GM12878 (cell line): ENCODE measurements at regions of chr16 and their contacts with region 1.

Region 1: DNA sequence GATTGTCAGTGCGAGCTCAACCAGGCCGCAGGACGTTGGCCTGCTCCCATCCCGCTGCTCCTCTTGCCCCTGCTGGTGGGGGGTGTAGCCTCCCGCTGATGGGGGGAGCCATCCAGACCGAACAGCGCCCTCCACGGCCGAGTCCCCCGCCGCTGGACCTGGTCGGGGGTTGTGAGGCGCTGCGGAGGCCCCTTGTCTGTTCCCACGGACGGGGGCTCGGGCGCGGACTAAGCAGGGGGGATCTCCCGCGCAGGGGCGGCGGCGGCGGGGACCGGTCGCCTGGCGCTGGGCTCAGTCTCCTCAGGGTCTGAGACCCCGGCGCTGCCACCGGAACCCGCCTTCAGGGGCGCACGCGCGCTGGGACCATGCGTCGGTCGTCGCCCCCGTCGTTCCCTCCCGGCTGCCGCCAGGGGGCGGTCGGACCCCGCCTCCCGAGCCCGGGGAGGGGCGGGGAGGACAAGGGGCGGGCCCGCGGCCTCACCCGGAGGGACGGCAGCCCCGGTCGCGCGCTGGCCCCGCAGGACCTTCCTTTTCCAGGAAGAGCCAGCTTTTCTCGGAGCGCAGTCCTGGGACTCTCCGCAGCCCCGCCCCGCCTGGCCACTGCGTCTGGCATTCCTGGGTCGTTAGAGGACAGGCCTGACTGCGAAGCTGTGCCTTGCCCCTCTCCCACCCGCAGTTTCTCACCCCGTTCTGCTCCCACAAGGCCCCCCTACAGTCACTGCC is 6.3 kb upstream of the IL32 start:
- DNase-seq: no peak
- ATAC-seq: peak; percentile 97
- H3K4me3 ChIP-seq: peak overlapping the region; percentile 87
- H3K27ac ChIP-seq: peak overlapping the region; percentile 70
- H3K4me1 ChIP-seq: peaks cover 16% of the 10 kb centered on the region
- H3K27me3 ChIP-seq: no peaks in the 10 kb centered on the region
- CTCF ChIP-seq: peak; percentile 71 to 94 (median 85)
- EP300 ChIP-seq: no peak
- POLR2A ChIP-seq: peak; percentile 71
- RAD21 ChIP-seq: peak; percentile 93

Region 2: DNA sequence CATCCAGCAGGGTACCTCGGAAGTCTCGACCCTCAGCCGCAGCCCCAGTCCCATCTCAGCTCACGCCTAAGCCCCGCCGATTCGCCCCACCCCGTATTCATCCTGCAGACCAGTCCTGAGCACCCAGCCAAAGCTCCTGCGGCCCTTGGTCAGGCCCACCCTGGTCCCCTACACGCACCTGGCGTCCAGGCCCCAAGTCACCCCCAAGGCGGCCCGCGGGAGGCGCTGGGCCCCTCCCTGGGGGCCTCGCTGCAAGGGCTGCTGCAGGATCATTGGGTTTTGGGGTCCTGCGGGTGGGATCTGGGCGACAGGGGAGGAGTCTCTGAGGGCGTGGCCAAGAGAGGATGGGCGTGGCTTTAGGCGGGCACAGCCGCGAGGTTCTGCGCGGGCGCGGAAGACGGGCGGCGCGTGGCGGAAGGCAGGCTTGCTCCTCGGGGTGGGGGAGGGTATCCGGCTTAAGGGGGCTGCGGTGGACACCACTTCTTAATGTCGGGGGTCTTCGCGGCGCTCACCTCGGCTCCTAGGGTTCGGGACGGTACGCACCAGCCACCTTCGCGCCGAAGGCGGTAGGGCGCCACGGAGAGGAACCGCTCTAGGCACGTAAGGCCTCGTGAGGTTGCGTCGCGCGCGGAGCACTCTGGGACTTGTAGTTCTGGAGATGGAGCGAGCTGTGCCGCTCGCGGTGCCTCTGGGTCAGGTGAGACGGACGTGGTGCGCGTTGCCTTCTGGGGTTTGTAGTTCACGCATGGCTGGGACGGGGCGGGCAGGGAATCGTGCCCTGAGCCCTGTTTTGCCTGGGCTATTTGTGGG is 35.3 kb before region 1 on chr16 and contains the starts of genes HCFC1R1 and THOC6:
- CTCF ChIA-PET with region 1: interaction called, 62 read pairs
- POLR2A ChIA-PET with region 1: interaction called, 4 read pairs
- RAD21 ChIA-PET with region 1: interaction called, 8 read pairs
- SMC1A ChIA-PET with region 1: interaction called, 4 read pairs
- in situ Hi-C with region 1: no loop called
- intact Hi-C with region 1: no loop called
- DNase-seq: peak; percentile 94
- ATAC-seq: peak; percentile 85
- H3K4me3 ChIP-seq: peak within 1 kb of the TSS; percentile 87
- H3K27ac ChIP-seq: peak within 1 kb of the TSS; percentile 86
- H3K4me1 ChIP-seq: peaks cover 25% of the 10 kb centered on the region
- H3K27me3 ChIP-seq: no peaks in the 10 kb centered on the region; a peak in 1 of 4 replicates
- CTCF ChIP-seq: no peak
- EP300 ChIP-seq: no peak
- POLR2A ChIP-seq: peak; percentile 95
- RAD21 ChIP-seq: no peak
- polyA plus RNA-seq, gene HCFC1R1: 2.8 to 10.2 TPM
- polyA plus RNA-seq, gene THOC6: 1.0 to 2.4 TPM

Region 3: GRCh38 chr16:3035302-3036234 is 23.6 kb before region 1 on chr16:
- CTCF ChIA-PET with region 1: interaction called, 62 read pairs
- POLR2A ChIA-PET with region 1: interaction called, 3 read pairs
- RAD21 ChIA-PET with region 1: interaction called, 28 read pairs
- SMC1A ChIA-PET with region 1: interaction called, 5 read pairs
- in situ Hi-C with region 1: no loop called
- intact Hi-C with region 1: no loop called
- DNase-seq: no peak
- ATAC-seq: no peak
- H3K4me3 ChIP-seq: no peak overlapping the region
- H3K27ac ChIP-seq: no peak overlapping the region
- H3K4me1 ChIP-seq: peaks cover 6% of the 10 kb centered on the region
- H3K27me3 ChIP-seq: peaks cover 8 to 17% of the 10 kb centered on the region in 2 experiments; a peak in 3 of 4 replicates
- CTCF ChIP-seq: no peak
- EP300 ChIP-seq: no peak
- POLR2A ChIP-seq: no peak
- RAD21 ChIP-seq: no peak

Region 4: GRCh38 chr16:3074860-3075522 is 15.8 kb after region 1 on chr16:
- CTCF ChIA-PET with region 1: interaction called, 39 read pairs
- POLR2A ChIA-PET with region 1: interaction called, 5 read pairs
- RAD21 ChIA-PET with region 1: interaction called, 14 read pairs
- SMC1A ChIA-PET with region 1: interaction called, 52 read pairs
- in situ Hi-C with region 1: no loop called
- intact Hi-C with region 1: no loop called
- DNase-seq: peak; percentile 69
- ATAC-seq: peak; percentile 88
- H3K4me3 ChIP-seq: peak overlapping the region; percentile 55
- H3K27ac ChIP-seq: peak overlapping the region; percentile 77
- H3K4me1 ChIP-seq: peaks cover 45% of the 10 kb centered on the region
- H3K27me3 ChIP-seq: no peaks in the 10 kb centered on the region
- CTCF ChIP-seq: no peak
- EP300 ChIP-seq: no peak
- POLR2A ChIP-seq: peak; percentile 64
- RAD21 ChIP-seq: no peak

Region 5: DNA sequence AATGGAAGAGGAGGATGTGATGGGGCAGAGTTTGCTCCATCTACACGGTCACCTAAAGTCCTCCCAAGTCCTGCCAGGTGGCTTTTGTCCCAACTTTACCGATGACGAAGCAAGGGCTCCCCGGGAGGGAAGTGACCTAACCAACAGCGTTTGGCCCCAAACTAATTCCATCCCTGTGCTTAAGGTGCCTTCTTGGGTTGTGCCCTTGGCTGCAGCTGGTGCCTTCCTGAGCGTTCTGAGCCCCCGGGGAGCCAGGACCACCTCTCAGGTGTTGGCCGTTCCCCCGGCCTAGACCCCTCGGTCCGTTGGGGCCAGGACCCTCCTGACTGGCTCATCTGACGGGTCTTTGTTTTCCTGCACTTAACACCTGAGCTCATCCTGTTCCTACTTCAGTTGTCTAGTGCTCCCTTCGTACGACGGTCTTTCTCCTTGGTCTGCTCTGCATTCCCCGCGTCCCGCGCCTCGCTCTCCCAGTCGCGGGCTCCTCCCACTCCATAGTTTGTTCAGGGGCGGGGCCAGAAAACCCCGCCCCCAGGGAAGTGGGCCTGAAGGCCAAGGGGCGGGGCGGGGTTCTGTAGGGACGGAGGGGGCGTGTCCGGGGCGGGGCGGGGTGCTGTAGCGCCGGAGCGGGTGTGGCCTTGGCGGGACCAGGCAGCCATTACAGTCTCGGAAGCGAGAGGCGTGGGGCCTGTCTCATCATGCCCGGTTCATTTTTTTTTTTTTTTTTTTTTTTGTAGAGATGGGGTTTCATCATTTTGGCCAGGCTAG is 40.8 kb after region 1 on chr16:
- CTCF ChIA-PET with region 1: interaction called, 19 read pairs
- POLR2A ChIA-PET with region 1: interaction called, 3 read pairs
- RAD21 ChIA-PET with region 1: interaction called, 6 read pairs
- SMC1A ChIA-PET with region 1: no interaction called
- in situ Hi-C with region 1: loop called (anchors 5 kb)
- intact Hi-C with region 1: loop called (anchors 1 kb)
- DNase-seq: no peak
- ATAC-seq: peak; percentile 92
- H3K4me3 ChIP-seq: peak overlapping the region; percentile 35; the same call in 1 of the 2 replicates
- H3K27ac ChIP-seq: no peak overlapping the region
- H3K4me1 ChIP-seq: peaks cover 29% of the 10 kb centered on the region
- H3K27me3 ChIP-seq: no peaks in the 10 kb centered on the region
- CTCF ChIP-seq: no peak
- EP300 ChIP-seq: no peak
- POLR2A ChIP-seq: peak; percentile 39; the same call in 1 of the 2 replicates
- RAD21 ChIP-seq: no peak

Region 6: GRCh38 chr16:3165111-3165822 is 106.1 kb after region 1 on chr16:
- CTCF ChIA-PET with region 1: interaction called, 11 read pairs
- POLR2A ChIA-PET with region 1: no interaction called
- RAD21 ChIA-PET with region 1: interaction called, 9 read pairs
- SMC1A ChIA-PET with region 1: interaction called, 4 read pairs
- in situ Hi-C with region 1: no loop called
- intact Hi-C with region 1: loop called (anchors 2 kb)
- DNase-seq: no peak
- ATAC-seq: peak; percentile 36
- H3K4me3 ChIP-seq: peak overlapping the region; percentile 25; the same call in 1 of the 2 replicates
- H3K27ac ChIP-seq: no peak overlapping the region
- H3K4me1 ChIP-seq: peaks cover 2% of the 10 kb centered on the region
- H3K27me3 ChIP-seq: no peaks in the 10 kb centered on the region; a peak in 1 of 4 replicates
- CTCF ChIP-seq: no peak
- EP300 ChIP-seq: no peak
- POLR2A ChIP-seq: no peak
- RAD21 ChIP-seq: no peak

Region 7: DNA sequence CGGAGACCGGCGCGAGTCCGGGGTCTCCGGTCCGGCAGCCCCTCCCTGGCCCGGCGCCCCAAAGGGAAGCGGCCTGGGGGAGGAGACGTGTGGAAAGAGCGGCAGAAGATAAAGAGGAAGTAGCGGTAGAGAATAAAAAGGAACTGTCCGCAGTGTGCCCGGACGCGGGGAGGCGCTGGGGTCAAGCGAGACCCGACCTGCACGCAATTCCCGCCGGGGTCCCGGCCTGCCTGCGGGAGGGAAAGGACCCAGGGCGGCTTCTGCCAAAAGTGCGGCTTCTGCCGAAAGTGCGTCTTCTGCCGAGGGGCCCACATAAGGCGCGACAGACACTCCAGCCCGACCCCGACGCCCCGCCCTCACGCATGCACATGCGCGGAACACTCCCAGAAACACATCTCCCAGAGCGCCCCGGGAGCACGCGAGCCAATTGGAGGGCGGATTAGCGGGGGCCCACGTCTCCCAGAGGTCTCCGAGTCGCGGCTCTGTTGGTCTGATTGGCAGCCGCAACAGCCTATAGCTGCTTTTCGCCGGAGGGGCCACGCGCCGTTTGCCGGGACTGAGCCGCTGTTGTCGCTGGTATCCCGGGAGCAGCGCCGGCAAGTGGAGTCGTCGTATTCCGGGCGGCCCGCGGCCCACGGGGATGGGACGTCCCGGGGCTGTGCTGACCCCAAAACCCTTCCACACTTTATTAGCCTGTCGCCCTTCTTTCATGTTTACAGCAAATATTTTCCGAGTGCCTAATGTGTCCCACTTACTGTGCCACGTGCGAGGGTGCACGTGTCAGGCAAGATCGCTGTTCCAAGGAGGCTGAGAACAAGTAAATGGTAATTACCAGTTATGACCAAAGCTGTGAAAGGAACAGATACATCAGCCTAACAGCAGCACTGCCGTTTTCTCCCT is 205.2 kb after region 1 on chr16:
- CTCF ChIA-PET with region 1: no interaction called
- POLR2A ChIA-PET with region 1: no interaction called
- RAD21 ChIA-PET with region 1: no interaction called
- SMC1A ChIA-PET with region 1: no interaction called
- in situ Hi-C with region 1: no loop called
- intact Hi-C with region 1: no loop called
- DNase-seq: peak; percentile 84
- ATAC-seq: peak; percentile 96
- H3K4me3 ChIP-seq: peak overlapping the region; percentile 82
- H3K27ac ChIP-seq: peak overlapping the region; percentile 93
- H3K4me1 ChIP-seq: peaks cover 8% of the 10 kb centered on the region; the same call in 1 of the 2 replicates
- H3K27me3 ChIP-seq: no peaks in the 10 kb centered on the region
- CTCF ChIP-seq: peak; percentile 38 to 47 (median 44)
- EP300 ChIP-seq: 0 out of 4 replicates have a peak, but pooled peaks of 1 of the 2 experiments have one; percentile 18
- POLR2A ChIP-seq: peak; percentile 86
- RAD21 ChIP-seq: peak; percentile 45; the same call in 1 of the 2 replicates